GM10248 (cell line): ENCODE measurements at regions of chr2 and their contacts with region 1.

Region 1: GRCh38 chr2:233251306-233252116 is at the start of gene ATG16L1:
- DNase-seq: peak; percentile 99
- CTCF ChIP-seq: peak; percentile 99

Region 2: DNA sequence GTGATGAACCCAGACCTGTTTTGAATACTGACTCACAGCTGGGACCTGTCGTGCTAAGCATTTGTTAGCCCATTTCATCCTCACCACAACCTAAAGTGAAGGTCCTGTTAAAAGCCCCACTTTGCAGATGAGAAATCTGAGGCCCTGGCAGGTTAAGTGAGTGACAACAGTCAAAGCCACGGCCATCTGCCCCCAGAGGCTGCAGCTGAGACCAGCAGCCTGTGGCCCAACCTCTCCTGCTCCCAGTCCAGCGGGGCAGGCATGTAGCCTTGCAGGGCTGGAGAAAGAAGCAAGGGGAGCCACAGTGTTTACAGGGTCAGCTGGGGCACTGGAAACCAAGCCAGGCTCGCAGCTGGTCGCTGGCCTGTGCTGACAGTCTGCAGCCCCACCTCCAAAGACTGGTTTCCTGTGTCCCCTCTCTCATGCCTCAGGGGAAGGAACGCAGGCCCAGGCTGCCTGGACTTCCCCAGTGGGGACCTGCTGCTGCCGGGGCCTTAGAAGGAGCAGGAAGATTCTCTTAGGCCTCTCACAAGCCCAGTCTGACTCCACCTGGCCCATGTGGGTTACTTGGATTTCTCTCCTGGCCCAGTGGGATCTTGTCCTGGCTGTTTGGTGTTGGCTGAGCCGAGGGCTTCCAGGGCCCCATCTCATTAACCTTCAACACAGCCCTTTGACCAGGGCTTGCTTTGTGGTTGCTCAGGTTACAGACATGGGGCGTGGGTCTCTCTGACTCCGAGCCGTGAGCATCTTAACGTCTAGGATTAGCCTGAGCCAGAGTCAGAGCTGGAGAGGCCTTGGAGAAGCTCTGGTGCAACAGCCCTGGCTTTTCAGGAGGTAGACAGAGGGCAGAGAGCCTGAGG is 189.7 kb before region 1 on chr2:
- CTCF ChIA-PET with region 1: interaction called, 17 read pairs
- POLR2A ChIA-PET with region 1: no interaction called
- DNase-seq: peak; percentile 71
- CTCF ChIP-seq: peak; percentile 44

Region 3: DNA sequence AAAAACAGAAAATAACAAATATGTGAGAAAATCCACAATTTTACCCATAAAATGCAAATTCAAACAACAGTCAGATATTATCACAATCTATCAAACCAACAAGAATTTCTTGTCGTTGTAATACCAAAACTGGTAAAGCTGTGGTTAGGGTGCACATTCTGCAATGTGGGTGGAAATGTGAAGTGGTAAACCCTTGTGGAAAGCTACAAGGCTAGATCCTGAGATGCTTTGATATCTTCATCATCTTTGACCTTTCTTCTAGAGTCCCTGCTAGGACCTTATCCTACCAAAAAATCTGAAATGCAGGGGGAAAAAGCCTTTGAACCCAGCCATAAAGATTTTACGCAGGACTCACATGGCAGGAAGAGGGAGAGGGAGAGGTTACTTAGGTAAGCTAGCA is 17.2 kb before region 1 on chr2:
- CTCF ChIA-PET with region 1: interaction called, 22 read pairs
- POLR2A ChIA-PET with region 1: no interaction called
- DNase-seq: no peak
- CTCF ChIP-seq: no peak

Region 4: GRCh38 chr2:233261819-233262555 is 10.5 kb after region 1 on chr2:
- CTCF ChIA-PET with region 1: interaction called, 20 read pairs
- POLR2A ChIA-PET with region 1: interaction called, 4 read pairs
- DNase-seq: peak; percentile 53
- CTCF ChIP-seq: no peak

Region 5: DNA sequence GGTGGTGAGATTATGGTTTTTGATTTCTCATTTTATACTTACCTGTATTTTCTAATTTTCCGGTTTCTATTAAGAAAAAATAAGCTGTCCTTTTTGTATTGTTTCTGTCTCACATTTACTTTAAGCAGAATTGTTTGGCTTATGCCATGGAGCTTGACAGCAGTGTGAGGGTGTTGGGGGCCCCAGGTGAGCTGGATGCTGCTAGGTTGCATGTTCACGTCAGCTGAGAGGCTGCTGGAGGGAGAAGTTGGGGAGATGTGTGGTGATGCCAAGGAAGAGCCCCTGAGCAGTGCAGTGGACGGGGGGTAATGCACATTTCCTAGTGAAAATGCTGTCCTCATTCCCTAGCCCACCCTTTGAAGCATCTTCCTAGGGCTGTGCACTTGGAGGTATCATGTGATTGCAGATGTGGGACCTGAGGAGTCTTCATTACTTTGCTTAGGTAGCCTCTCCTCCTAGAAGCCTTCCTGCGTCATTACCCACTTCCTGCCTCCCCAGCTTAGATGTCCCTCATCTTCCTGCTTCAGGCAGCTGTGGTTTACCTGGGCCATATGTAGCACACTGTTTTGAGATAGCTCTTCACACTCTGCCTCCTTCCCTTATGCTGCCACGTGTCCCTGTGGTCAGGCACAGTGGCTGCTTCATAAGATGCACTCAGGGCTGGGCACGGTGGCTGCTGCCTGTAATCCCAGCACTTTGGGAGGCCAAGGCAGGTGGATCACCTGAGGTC is 16.2 kb after region 1 on chr2:
- CTCF ChIA-PET with region 1: interaction called, 20 read pairs
- POLR2A ChIA-PET with region 1: no interaction called
- DNase-seq: peak; percentile 35
- CTCF ChIP-seq: no peak